Thyroid gland (tissue), 4 donors: ENCODE measurements at regions of chr1 and their contacts with region 1.

Region 1: GRCh38 chr1:67524143-67525052 is 94.2 kb upstream of the SERBP1 start:
- DNase-seq: peak; percentile 40 to 55
- H3K4me3 ChIP-seq: no peak overlapping the region
- H3K27ac ChIP-seq: no peak overlapping the region
- H3K4me1 ChIP-seq: peaks cover 0 to 9% of the 10 kb centered on the region in 2 donors
- H3K27me3 ChIP-seq: no peaks in the 10 kb centered on the region
- CTCF ChIP-seq: peak in 1 of 6 experiments; percentile 6
- POLR2A ChIP-seq: no peak

Region 2: GRCh38 chr1:67760030-67760821 is 235.8 kb after region 1 on chr1:
- intact Hi-C with region 1: loop called (anchors 5 kb)
- DNase-seq: peak; percentile 65 to 74
- H3K4me3 ChIP-seq: no peak overlapping the region
- H3K27ac ChIP-seq: peak overlapping the region; percentile 67 to 90 (median 80)
- H3K4me1 ChIP-seq: peaks cover 28 to 55% of the 10 kb centered on the region in 2 donors
- H3K27me3 ChIP-seq: no peaks in the 10 kb centered on the region
- CTCF ChIP-seq: peak; percentile 64 to 95 (median 74)
- POLR2A ChIP-seq: no peak

Region 3: DNA sequence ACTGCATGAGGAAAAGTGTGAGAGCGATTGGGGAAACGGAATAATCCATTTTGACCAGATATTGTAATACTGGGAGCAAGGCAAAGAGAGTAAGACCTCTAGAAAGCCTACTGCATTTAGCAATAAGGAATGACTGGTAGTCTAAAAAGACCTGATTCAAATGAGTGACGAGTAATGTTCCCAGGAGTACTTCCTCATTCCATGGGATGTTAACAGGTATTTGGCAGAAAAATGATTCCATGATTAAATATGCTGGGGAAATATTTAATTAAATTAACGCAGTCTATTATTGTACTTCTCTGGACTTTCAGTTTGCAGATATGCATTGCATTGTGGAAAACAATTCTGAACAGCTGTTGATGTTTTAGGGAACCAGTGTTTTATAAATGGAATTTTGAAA is 819.8 kb after region 1 on chr1:
- intact Hi-C with region 1: loop called (anchors 5 kb)
- DNase-seq: no peak
- H3K4me3 ChIP-seq: no peak overlapping the region
- H3K27ac ChIP-seq: no peak overlapping the region
- H3K4me1 ChIP-seq: no peaks in the 10 kb centered on the region
- H3K27me3 ChIP-seq: no peaks in the 10 kb centered on the region
- CTCF ChIP-seq: no peak
- POLR2A ChIP-seq: no peak